ENCODE measurements at regions of chr6 and their contacts with region 1.

Region 1: GRCh38 chr6:7107578-7108195 is at the start of gene RREB1:
- DNase-seq: peak; percentile 57
- H3K4me3 ChIP-seq: peak within 1 kb of the TSS; percentile 89 to 98 (median 96)
- H3K27ac ChIP-seq: peak within 1 kb of the TSS; percentile 78
- H3K4me1 ChIP-seq: peaks cover 25% of the 10 kb centered on the region
- H3K27me3 ChIP-seq: no peaks in the 10 kb centered on the region
- CTCF ChIP-seq: no peak
- total RNA-seq, gene RREB1: 25.3 to 39.3 TPM

Region 2: GRCh38 chr6:6724539-6725467 is 382.9 kb before region 1 on chr6:
- CTCF ChIA-PET with region 1: no interaction called
- dilution Hi-C with region 1: no loop called
- in situ Hi-C with region 1: no loop called
- intact Hi-C with region 1: loop called (anchors 2 kb)
- DNase-seq: peak; percentile 55
- H3K4me3 ChIP-seq: peak overlapping the region; percentile 26 to 47 (median 34)
- H3K27ac ChIP-seq: no peak overlapping the region
- H3K4me1 ChIP-seq: peaks cover 13% of the 10 kb centered on the region
- H3K27me3 ChIP-seq: no peaks in the 10 kb centered on the region
- CTCF ChIP-seq: peak; percentile 49 to 78

Region 3: DNA sequence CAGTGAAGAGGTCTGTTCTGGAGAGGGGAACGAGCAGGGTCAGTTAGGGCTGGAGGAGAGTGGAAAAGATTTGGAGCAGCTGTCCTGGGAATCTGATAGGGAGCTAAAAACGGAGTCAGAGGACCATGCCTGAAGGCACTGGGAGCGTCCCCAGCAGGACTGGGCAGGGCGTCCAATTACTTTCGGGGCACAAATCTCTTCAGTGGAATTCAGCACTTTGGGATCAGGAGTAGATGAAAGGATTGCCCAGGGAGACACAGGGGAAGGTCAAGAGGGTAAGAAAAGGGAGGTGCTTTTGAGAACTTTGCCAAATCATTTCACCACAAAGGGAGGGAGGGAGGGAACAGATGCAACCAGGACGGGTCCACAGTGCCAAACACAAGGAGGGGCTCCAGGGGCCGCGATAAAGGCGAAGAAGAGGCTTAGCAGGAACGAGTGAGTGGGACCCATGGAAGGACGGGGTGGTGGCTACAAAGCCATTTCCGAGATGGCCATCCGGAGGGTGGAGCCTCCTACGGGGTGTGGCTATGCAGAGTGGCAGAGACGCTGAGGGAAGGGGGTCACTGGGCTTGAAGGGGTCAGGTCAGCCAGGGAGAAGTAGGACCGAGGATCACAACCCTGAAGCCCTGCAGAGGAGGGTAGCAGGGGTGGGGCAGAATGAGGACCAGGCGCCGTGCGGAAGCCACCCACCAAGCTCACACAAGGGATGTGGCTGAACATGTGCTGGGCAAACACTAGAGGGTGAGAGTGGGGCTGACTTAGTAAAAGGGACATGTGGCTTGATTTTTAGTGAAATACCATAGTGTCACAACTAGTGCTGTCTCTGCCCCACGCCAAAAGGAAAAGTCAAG is 179.9 kb before region 1 on chr6:
- CTCF ChIA-PET with region 1: no interaction called
- dilution Hi-C with region 1: no loop called
- in situ Hi-C with region 1: no loop called
- intact Hi-C with region 1: loop called (anchors 10 kb)
- DNase-seq: no peak
- H3K4me3 ChIP-seq: no peak overlapping the region
- H3K27ac ChIP-seq: no peak overlapping the region
- H3K4me1 ChIP-seq: no peaks in the 10 kb centered on the region
- H3K27me3 ChIP-seq: no peaks in the 10 kb centered on the region
- CTCF ChIP-seq: no peak

Region 4: GRCh38 chr6:7058250-7058923 is 49.3 kb before region 1 on chr6:
- CTCF ChIA-PET with region 1: no interaction called
- dilution Hi-C with region 1: no loop called
- in situ Hi-C with region 1: no loop called
- intact Hi-C with region 1: loop called (anchors 5 kb)
- DNase-seq: peak; percentile 99
- H3K4me3 ChIP-seq: no peak overlapping the region
- H3K27ac ChIP-seq: peak overlapping the region; percentile 87
- H3K4me1 ChIP-seq: peaks cover 36% of the 10 kb centered on the region
- H3K27me3 ChIP-seq: no peaks in the 10 kb centered on the region
- CTCF ChIP-seq: no peak

Region 5: DNA sequence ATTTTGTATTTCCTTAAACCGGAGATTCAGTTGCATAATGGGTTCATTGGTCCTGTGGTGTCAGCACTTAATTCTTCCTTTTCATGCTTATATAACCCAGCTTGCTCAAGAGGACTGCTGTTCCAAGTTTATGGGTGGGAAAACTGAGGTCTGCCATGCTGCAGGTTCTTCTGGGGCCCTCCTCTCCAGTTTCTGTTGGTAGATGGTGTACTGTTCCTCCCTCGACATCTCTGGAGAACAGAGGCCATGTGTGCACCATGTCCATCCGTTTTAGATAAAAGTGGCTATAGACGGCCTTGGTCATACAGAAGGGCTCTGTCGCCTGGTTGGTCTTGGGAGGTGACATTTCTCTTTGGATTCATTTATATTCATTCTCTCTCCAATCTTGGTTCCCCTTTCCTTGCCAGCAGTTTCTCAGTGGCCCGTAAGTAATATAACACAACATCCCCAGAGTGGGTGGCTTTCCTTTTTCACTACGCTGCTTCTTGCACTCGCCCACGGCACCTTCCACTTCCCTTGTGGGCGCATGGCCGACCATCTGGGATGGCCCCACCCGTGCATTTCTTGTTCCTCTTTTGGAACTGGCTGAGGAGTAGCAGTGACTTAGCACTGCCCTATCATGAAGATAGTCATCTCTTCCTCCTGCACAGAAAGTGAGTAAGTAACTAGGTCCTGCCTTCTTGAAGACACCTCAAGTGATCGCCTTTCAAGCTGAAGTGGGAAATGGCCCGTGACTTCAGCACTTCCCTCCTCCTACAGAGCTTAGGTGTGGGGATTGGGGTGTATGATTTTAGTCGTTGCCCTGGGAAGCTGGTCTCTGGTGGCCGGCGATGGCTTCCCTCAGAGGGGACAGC is 94.2 kb after region 1 on chr6:
- CTCF ChIA-PET with region 1: no interaction called
- dilution Hi-C with region 1: no loop called
- in situ Hi-C with region 1: no loop called
- intact Hi-C with region 1: loop called (anchors 5 kb)
- DNase-seq: no peak
- H3K4me3 ChIP-seq: no peak overlapping the region
- H3K27ac ChIP-seq: peak overlapping the region; percentile 39
- H3K4me1 ChIP-seq: peaks cover 15% of the 10 kb centered on the region
- H3K27me3 ChIP-seq: no peaks in the 10 kb centered on the region
- CTCF ChIP-seq: no peak

Region 6: GRCh38 chr6:7238900-7239589 is 131.4 kb after region 1 on chr6:
- CTCF ChIA-PET with region 1: interaction called, 5 read pairs
- dilution Hi-C with region 1: no loop called
- in situ Hi-C with region 1: no loop called
- intact Hi-C with region 1: loop called (anchors 1 kb)
- DNase-seq: peak; percentile 58
- H3K4me3 ChIP-seq: no peak overlapping the region
- H3K27ac ChIP-seq: no peak overlapping the region
- H3K4me1 ChIP-seq: peaks cover 15% of the 10 kb centered on the region
- H3K27me3 ChIP-seq: no peaks in the 10 kb centered on the region
- CTCF ChIP-seq: peak; percentile 42 to 72

Measured in mammary epithelial cell (primary cell).